OCI-LY7 (cell line): ENCODE measurements at regions of chr3 and their contacts with region 1.

Region 1: DNA sequence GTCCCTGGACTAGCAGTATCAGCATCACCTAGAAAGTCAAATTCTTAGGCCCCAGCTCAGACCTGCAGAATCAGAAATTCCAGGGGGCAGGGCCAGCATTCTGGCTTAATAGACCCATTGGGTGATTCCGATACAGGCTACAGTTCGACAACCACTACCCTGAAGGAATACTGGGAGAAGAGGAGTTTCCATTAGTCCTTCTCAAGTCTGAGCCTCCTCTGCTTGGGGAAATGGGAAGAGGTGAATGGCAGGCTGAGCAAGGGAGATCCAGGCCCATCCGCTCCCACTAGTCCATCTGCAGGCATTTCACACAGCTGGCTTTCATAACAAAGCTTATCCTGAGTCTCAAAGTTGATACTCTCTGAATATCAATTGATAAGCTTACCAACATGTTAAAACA is 69.1 kb downstream of the MECOM start:
- DNase-seq: no peak
- H3K4me3 ChIP-seq: no peak overlapping the region
- H3K27ac ChIP-seq: no peak overlapping the region
- H3K4me1 ChIP-seq: no peaks in the 10 kb centered on the region
- CTCF ChIP-seq: no peak

Region 2: DNA sequence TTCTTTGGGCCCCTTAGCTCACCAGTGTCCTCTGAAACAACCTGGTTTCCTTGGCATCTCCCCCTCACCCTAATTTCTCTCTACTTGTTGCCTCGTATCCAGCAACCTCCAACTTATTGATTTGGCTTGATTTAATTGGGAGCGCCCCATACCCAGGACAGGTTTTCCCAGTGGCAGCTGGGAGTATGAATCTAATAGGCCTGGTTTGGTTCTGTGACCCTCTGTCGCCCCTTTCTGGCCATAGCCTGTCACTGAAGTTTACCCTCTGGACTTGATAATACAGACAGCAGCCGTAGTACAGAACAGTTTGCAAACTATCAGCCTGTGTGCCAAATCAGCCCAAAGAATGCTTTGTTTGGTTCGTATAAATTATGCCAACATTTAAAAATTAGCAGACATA is 973.6 kb before region 1 on chr3:
- CTCF ChIA-PET with region 1: no interaction called
- POLR2A ChIA-PET with region 1: interaction called, 11 read pairs
- intact Hi-C with region 1: no loop called
- DNase-seq: peak; percentile 32
- H3K4me3 ChIP-seq: no peak overlapping the region
- H3K27ac ChIP-seq: no peak overlapping the region
- H3K4me1 ChIP-seq: no peaks in the 10 kb centered on the region
- CTCF ChIP-seq: peak; percentile 75

Region 3: GRCh38 chr3:169699536-169700050 is 105.2 kb after region 1 on chr3:
- CTCF ChIA-PET with region 1: no interaction called
- POLR2A ChIA-PET with region 1: no interaction called
- intact Hi-C with region 1: no loop called
- DNase-seq: no peak
- H3K4me3 ChIP-seq: no peak overlapping the region
- H3K27ac ChIP-seq: no peak overlapping the region
- H3K4me1 ChIP-seq: no peaks in the 10 kb centered on the region
- CTCF ChIP-seq: no peak

Region 4: GRCh38 chr3:169931747-169932520 is 337.5 kb after region 1 on chr3:
- CTCF ChIA-PET with region 1: no interaction called
- POLR2A ChIA-PET with region 1: no interaction called
- intact Hi-C with region 1: no loop called
- DNase-seq: peak; percentile 94
- H3K4me3 ChIP-seq: peak overlapping the region; percentile 56
- H3K27ac ChIP-seq: peak overlapping the region; percentile 86
- H3K4me1 ChIP-seq: peaks cover 81% of the 10 kb centered on the region
- CTCF ChIP-seq: no peak